ENCODE measurements at regions of chr1 and their contacts with region 1.

Region 1: GRCh38 chr1:64136752-64137411 is 66.5 kb upstream of the UBE2U start:
- DNase-seq: peak; percentile 72
- ATAC-seq: peak; percentile 93
- H3K4me3 ChIP-seq: no peak overlapping the region
- H3K27ac ChIP-seq: peak overlapping the region; percentile 41; the same call in 1 of the 2 replicates
- H3K4me1 ChIP-seq: no peaks in the 10 kb centered on the region
- H3K27me3 ChIP-seq: no peaks in the 10 kb centered on the region
- CTCF ChIP-seq: peak; percentile 92

Region 2: DNA sequence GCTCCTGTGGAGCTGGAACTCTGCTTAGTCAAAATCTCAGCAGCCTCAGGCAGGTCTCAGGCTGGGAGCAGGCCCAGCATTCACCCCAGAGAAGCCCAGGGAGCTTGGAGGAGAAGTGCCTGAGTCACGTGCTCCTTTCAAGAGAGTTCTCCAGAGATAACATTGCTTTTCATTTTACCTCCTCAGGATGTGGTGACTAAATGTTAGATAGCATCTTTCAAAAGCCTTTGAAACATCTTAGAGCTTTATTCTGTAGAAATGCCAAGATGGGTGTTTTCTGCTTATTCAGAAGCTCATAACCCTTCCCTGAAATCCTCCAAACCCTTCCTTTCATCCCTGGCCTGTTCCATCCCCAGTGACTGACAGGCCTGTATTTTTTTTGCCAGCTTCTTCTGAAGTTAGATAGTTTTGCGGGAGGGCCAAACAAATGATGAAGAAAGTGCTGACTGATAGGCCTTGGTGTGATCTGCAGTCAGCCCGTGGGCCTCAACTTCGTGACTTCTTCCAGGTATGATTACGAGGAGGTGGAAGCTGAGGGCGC is 485.7 kb before region 1 on chr1:
- CTCF ChIA-PET with region 1: interaction called, 10 read pairs
- POLR2A ChIA-PET with region 1: no interaction called
- in situ Hi-C with region 1: no loop called
- intact Hi-C with region 1: no loop called
- DNase-seq: no peak
- ATAC-seq: no peak
- H3K4me3 ChIP-seq: no peak overlapping the region
- H3K27ac ChIP-seq: no peak overlapping the region
- H3K4me1 ChIP-seq: no peaks in the 10 kb centered on the region
- H3K27me3 ChIP-seq: no peaks in the 10 kb centered on the region
- CTCF ChIP-seq: no peak

Region 3: GRCh38 chr1:63691701-63692425 is 445.0 kb before region 1 on chr1:
- CTCF ChIA-PET with region 1: interaction called, 24 read pairs
- POLR2A ChIA-PET with region 1: no interaction called
- in situ Hi-C with region 1: no loop called
- intact Hi-C with region 1: loop called (anchors 5 kb)
- DNase-seq: peak; percentile 92
- ATAC-seq: peak; percentile 95
- H3K4me3 ChIP-seq: no peak overlapping the region
- H3K27ac ChIP-seq: peak overlapping the region; percentile 93
- H3K4me1 ChIP-seq: peaks cover 14% of the 10 kb centered on the region
- H3K27me3 ChIP-seq: no peaks in the 10 kb centered on the region
- CTCF ChIP-seq: peak; percentile 87

Region 4: DNA sequence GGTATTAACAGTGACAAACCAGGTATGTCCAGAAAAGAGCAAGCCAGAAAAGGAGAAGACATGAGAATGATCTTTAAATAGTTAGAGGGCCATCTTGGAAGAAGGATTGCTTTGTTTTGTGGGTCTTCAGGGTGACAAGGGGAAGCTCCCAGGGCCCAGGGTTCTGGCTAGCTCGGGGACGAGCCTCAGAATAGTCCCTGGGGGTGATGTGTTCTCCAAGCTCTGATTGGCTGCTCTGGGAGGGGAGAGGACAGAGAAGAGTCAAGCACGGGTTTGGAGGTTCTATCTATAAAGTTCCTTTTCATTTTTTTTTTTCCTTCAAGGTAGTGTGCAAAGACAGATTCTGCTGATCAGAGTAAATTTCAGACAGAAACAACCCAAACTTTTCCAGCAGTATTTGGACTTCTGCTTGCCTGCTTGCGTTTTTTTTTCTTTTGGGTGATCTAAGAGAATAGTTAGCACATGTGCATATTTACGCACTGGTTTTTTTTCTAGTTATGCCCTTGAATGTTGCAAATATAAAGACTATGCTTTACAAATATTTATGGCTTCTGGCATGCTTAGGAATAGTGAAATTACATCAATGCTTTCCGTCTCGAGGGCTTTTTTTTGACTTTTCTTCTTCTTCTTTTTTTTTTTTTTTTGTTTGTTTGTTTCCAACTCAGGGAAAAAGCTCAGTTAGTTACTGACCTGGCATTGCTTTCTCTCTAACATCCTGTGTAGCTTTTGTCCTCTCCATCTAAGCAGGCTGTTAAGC is 303.3 kb before region 1 on chr1:
- CTCF ChIA-PET with region 1: interaction called, 4 read pairs
- POLR2A ChIA-PET with region 1: interaction called, 13 read pairs
- in situ Hi-C with region 1: no loop called
- intact Hi-C with region 1: no loop called
- DNase-seq: no peak
- ATAC-seq: no peak
- H3K4me3 ChIP-seq: no peak overlapping the region
- H3K27ac ChIP-seq: no peak overlapping the region
- H3K4me1 ChIP-seq: peaks cover 3% of the 10 kb centered on the region; the same call in 1 of the 2 replicates
- H3K27me3 ChIP-seq: no peaks in the 10 kb centered on the region
- CTCF ChIP-seq: no peak

Region 5: DNA sequence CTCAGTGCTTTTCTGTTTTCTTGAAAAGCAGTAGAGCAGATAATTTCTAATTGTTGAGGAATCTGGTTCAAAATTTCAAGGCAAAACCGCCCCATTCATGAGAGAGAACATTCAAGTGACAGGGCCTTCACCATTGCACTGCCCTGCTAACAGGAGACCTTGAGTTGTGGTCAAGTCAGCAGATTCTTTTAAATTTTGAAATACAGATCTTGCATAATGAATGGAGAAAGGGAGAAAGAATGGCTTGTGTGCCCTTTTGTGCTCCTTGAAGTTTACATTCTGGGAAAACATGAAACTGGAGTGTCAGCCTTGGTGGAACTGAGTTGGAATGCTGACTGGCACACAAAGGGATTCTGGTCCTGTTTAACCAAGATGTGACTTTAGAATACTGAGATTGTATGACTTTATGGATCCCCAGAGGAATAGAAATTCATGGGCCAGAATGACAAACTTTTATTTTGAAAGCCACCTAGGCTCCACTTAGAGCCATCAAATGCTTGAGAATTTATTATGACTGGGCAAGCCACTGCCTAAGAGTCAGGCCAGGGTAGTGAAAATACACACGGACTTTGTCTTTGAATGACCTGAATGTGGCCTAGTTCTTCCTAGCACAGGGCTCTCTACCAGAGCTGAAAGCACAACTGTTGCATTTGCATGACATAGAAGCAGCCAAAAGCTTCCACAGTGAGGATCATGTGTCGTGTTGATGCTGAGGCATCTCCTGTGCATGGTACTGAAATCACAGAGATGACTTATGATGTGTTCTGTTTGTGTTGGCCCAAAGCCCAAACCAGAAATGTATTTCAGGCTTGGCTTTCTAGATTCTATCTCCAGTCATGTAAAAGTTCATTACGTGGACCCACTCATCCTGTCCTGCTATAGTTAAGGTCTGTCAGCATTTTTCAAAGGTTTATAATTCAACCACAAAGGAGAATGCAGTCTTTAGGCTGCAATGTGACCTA is 97.6 kb before region 1 on chr1:
- CTCF ChIA-PET with region 1: no interaction called
- POLR2A ChIA-PET with region 1: no interaction called
- in situ Hi-C with region 1: no loop called
- intact Hi-C with region 1: no loop called
- DNase-seq: peak; percentile 92
- ATAC-seq: peak; percentile 79
- H3K4me3 ChIP-seq: no peak overlapping the region
- H3K27ac ChIP-seq: no peak overlapping the region
- H3K4me1 ChIP-seq: peaks cover 10% of the 10 kb centered on the region
- H3K27me3 ChIP-seq: no peaks in the 10 kb centered on the region
- CTCF ChIP-seq: no peak